H1 (cell line): ENCODE measurements at regions of chr2 and their contacts with region 1.

Region 1: DNA sequence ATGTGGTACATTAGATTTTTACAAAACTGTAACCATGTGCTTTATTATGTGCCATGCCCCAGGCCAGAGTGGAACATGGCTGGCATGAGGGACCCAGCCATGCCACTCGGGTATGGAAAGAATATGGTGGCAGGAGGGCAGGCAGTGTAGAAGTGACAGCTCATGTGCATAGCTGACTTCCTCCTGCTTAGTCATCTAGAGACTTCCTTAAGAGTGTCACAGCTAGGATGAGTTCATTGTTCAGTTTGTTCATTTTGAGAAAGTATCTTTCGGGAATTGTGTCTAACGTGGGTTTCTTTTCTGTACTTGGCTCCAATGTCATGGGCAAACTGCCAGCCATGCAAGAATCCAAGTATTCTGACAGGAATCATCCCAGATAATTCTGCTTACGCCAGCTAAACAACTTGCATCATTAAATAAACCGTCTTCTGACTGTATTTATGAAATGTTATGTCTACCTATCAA is 94.3 kb upstream of the ITGB6 start:
- DNase-seq: no peak
- H3K4me3 ChIP-seq: no peak overlapping the region
- H3K27ac ChIP-seq: no peak overlapping the region
- H3K4me1 ChIP-seq: peaks cover 0 to 3% (median 0%) of the 10 kb centered on the region in 4 experiments; a peak in 1 of 7 replicates
- H3K27me3 ChIP-seq: no peaks in the 10 kb centered on the region
- CTCF ChIP-seq: no peak
- EP300 ChIP-seq: no peak
- POLR2A ChIP-seq: no peak
- RAD21 ChIP-seq: no peak

Region 2: DNA sequence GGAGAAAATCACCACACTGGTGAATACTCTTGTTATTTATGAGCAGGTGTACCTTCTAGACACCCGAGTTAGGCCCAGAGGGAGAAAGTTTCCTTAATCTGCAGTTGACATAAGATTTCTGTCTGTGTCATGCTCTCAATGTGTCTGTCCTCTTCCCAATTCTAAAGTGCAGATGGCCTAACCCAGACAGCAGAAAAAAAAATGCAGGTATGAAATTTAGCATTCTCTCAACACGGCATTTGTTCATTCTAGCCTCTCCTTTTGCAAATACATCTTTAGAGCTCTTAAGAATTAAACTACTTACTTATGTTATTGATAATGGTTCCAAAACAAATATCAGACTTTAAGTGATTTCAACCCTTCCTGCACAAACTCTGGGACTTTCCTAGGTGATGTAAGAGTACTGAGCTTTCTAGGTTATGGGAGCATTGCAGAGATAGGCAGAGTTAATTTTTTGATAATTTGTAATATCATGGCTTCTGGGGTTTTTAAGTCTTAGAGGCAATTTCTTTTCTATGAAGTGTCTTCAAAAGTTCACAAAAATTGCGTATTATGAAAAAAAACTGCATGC is 61.4 kb before region 1 on chr2:
- CTCF ChIA-PET with region 1: no interaction called
- POLR2A ChIA-PET with region 1: no interaction called
- DNase-seq: no peak
- H3K4me3 ChIP-seq: no peak overlapping the region
- H3K27ac ChIP-seq: no peak overlapping the region
- H3K4me1 ChIP-seq: no peaks in the 10 kb centered on the region
- H3K27me3 ChIP-seq: no peaks in the 10 kb centered on the region
- CTCF ChIP-seq: no peak
- EP300 ChIP-seq: no peak
- POLR2A ChIP-seq: no peak
- RAD21 ChIP-seq: no peak

Region 3: DNA sequence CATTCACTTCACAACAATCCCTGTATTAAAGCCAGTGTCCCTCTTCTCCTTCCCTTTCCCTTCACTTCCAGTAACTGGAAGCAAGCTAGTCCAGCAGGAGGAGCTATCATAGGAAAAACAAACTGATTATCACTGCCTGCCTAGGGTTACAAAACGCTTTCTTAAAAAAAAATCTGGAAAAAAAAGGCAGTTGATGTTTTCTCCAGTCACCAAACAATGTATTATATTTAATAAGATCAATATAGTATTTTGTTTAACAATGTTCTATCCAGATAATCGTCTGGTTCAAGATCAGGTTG is 15.5 kb before region 1 on chr2:
- CTCF ChIA-PET with region 1: interaction called, 11 read pairs
- POLR2A ChIA-PET with region 1: no interaction called
- DNase-seq: no peak
- H3K4me3 ChIP-seq: no peak overlapping the region
- H3K27ac ChIP-seq: no peak overlapping the region
- H3K4me1 ChIP-seq: no peaks in the 10 kb centered on the region
- H3K27me3 ChIP-seq: peaks cover 0 to 1% (median 0%) of the 10 kb centered on the region in 4 experiments; a peak in 1 of 7 replicates
- CTCF ChIP-seq: peak in 2 of 3 experiments; percentile 39 to 49; a peak in 2 of 4 replicates
- EP300 ChIP-seq: no peak
- POLR2A ChIP-seq: no peak
- RAD21 ChIP-seq: peak; percentile 39 to 46; a peak in 3 of 4 replicates

Region 4: GRCh38 chr2:160305081-160305760 is 10.8 kb after region 1 on chr2:
- CTCF ChIA-PET with region 1: interaction called, 11 read pairs
- POLR2A ChIA-PET with region 1: interaction called, 3 read pairs
- DNase-seq: no peak
- H3K4me3 ChIP-seq: no peak overlapping the region
- H3K27ac ChIP-seq: no peak overlapping the region
- H3K4me1 ChIP-seq: peaks cover 0 to 8% (median 3%) of the 10 kb centered on the region in 4 experiments; a peak in 2 of 7 replicates
- H3K27me3 ChIP-seq: no peaks in the 10 kb centered on the region; a peak in 1 of 7 replicates
- CTCF ChIP-seq: no peak
- EP300 ChIP-seq: no peak
- POLR2A ChIP-seq: no peak
- RAD21 ChIP-seq: no peak

Region 5: DNA sequence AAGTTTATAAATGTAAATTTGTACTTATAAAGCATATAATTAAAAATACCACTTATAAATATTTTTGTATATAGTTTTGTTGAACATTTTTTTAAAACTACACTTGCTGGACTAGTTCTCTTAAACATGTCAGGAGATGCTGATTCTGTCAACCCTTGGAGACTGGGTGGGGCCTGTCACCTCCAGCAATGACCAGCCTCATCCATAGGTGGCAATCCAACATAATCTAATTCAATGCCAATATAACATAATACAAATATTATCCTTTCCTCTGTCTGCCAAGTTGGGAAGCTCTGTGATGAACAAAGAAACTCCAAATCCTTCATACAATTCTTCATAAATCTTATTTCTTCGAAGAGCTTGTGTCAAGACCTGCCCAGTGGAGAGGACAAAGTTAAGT is 58.8 kb after region 1 on chr2:
- CTCF ChIA-PET with region 1: no interaction called
- POLR2A ChIA-PET with region 1: no interaction called
- DNase-seq: no peak
- H3K4me3 ChIP-seq: no peak overlapping the region
- H3K27ac ChIP-seq: no peak overlapping the region
- H3K4me1 ChIP-seq: no peaks in the 10 kb centered on the region; a peak in 1 of 7 replicates
- H3K27me3 ChIP-seq: no peaks in the 10 kb centered on the region
- CTCF ChIP-seq: peak in 2 of 3 experiments; percentile 15 to 29; a peak in 2 of 4 replicates
- EP300 ChIP-seq: no peak
- POLR2A ChIP-seq: no peak
- RAD21 ChIP-seq: peak; percentile 49 to 60